ENCODE measurements at regions of chr21 and their contacts with region 1.

Region 1: GRCh38 chr21:27265949-27266348 is 299.1 kb upstream of the ADAMTS5 start:
- DNase-seq: no peak
- ATAC-seq: no peak
- H3K4me3 ChIP-seq: no peak overlapping the region
- H3K27ac ChIP-seq: no peak overlapping the region
- H3K4me1 ChIP-seq: peaks cover 0 to 13% (median 0%) of the 10 kb centered on the region in 12 donors
- H3K27me3 ChIP-seq: no peaks in the 10 kb centered on the region
- CTCF ChIP-seq: no peak
- POLR2A ChIP-seq: no peak

Region 2: DNA sequence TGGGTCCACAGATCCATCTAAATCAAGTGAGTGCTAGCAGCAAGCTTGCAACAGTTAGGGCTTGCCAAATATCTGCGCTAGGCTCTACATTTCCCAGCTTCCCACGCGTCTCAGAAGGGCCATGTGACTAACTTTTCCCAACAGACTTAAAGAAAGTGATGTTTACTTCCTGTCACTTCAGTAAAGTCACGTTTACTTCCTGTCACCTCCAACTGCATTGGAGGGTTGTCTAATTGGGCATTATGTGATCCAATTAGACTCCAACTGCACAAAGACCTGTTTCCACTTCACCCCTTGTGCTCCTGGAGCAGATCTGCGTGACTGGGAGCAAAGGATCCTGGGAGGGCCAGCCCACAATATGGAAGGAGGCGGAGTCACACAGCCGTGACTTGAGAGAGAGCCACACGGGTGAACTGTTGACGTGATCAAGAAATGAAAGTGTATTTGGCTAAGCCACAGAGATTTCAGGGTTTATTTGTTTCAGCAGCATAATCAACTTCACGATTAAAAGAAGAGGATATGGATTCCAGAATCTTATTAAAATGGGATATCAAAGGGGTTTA is 770.6 kb before region 1 on chr21:
- intact Hi-C with region 1: no loop called
- DNase-seq: no peak
- ATAC-seq: no peak
- H3K4me3 ChIP-seq: no peak overlapping the region
- H3K27ac ChIP-seq: no peak overlapping the region
- H3K4me1 ChIP-seq: peaks cover 0 to 4% (median 0%) of the 10 kb centered on the region in 12 donors
- H3K27me3 ChIP-seq: no peaks in the 10 kb centered on the region
- CTCF ChIP-seq: no peak
- POLR2A ChIP-seq: no peak

Region 3: DNA sequence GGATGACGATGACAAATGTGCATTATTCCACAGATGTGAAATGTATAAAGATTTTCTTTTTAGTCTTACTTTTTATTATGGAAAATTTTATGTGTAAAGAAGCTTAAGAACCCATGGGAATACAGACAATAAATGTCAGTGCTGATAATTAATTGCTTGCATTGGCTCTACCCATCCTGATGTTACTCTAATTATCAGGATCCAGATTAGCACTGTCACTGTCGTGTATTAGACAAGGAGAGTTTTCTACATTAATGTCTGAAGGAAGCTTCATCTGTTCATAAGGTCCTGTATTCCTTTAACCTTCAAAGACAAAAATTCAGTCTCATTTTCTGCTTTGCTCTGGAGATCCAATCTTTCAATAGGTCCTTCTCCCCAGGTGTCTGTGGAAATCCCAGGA is 40.0 kb before region 1 on chr21:
- intact Hi-C with region 1: loop called in 1 of 10 experiments (anchors 2 kb)
- DNase-seq: no peak
- ATAC-seq: no peak
- H3K4me3 ChIP-seq: no peak overlapping the region
- H3K27ac ChIP-seq: no peak overlapping the region
- H3K4me1 ChIP-seq: no peaks in the 10 kb centered on the region
- H3K27me3 ChIP-seq: no peaks in the 10 kb centered on the region
- CTCF ChIP-seq: no peak
- POLR2A ChIP-seq: no peak

Region 4: DNA sequence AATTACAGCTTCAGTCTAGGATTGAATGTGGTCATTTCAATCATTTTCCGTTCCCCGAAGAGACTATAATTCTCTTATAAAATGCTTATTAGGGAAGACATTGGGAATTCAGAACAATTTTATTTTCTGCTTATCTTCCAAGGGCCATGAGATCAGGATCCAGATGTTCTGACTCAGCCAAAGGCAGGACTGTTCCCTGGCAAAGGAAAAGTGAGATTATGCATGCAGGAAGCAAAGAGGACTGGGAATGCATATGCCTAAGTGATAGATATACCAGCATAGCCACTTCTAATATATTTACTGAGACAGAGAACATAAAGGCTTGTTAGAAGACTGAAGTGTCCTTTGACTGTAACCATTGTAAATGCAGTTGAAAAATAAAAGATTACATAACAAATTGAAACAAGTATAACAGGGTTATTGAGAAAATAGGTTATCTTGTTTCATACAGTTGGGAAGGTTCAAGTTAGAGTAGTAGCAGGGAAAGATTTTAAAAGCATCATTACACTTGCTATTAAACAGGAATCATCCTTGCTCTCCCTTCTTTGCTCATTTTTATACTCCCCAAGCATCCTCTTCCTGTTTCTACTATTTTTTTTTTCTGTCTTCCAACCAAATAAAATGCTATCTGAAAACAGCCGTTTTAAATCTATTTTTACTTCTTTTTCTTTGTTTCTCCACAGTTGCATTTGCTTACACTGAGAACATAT is 140.5 kb after region 1 on chr21:
- intact Hi-C with region 1: no loop called
- DNase-seq: no peak
- ATAC-seq: peak; percentile 48 to 85 (median 66)
- H3K4me3 ChIP-seq: no peak overlapping the region
- H3K27ac ChIP-seq: peak overlapping the region in 10 of 12 donors; percentile 7 to 66 (median 28)
- H3K4me1 ChIP-seq: peaks cover 0 to 35% (median 18%) of the 10 kb centered on the region in 12 donors
- H3K27me3 ChIP-seq: no peaks in the 10 kb centered on the region
- CTCF ChIP-seq: no peak
- POLR2A ChIP-seq: no peak